Gastrocnemius medialis (tissue), 4 donors: ENCODE measurements at regions of chr11 and their contacts with region 1.

Region 1: DNA sequence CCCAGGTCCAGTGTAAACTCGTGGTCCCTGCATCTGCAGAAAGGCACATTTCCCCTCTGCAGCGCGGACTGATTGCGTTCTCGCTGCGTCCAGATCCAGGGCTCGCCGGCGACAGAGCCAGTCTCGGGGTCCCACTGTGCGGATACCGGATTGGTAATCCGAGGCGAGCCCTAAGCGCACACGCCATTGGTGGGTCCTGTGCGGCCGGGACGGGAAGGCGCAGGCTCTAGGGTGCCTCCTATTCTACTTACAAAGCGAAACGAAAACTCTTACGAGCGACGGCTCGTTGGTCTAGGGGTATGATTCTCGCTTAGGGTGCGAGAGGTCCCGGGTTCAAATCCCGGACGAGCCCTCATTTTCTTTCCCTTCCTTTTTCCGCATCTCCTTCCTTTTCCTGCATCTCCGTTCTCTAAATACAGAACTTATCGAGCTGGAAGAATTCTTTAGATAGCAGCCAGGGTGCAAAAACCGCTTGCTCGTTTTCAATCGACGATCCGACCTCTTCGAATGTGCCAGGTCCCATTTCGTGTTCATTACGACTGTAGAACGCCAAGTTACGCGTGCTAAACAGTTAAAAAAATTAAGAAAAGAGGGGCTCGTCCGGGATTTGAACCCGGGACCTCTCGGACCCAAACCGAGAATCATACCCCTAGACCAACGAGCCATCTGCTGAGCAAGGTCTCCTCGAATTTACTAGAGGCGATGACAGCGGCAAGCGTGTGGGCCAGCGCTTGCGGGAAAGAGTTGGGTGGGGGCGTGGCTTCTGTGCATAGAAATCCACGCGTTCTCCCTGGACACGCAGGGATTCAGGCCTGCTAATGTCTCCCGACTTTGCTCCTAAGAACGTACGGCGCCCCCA is 29.2 kb upstream of the WNT11 start:
- DNase-seq: peak; percentile 78 to 83
- ATAC-seq: peak; percentile 83
- H3K4me3 ChIP-seq: peak overlapping the region; percentile 68 to 93 (median 87)
- H3K27ac ChIP-seq: peak overlapping the region; percentile 81 to 91 (median 84)
- H3K4me1 ChIP-seq: peaks cover 0 to 16% of the 10 kb centered on the region in 2 donors
- H3K27me3 ChIP-seq: no peaks in the 10 kb centered on the region
- CTCF ChIP-seq: no peak
- POLR2A ChIP-seq: peak in 1 of 2 donors; percentile 17

Region 2: DNA sequence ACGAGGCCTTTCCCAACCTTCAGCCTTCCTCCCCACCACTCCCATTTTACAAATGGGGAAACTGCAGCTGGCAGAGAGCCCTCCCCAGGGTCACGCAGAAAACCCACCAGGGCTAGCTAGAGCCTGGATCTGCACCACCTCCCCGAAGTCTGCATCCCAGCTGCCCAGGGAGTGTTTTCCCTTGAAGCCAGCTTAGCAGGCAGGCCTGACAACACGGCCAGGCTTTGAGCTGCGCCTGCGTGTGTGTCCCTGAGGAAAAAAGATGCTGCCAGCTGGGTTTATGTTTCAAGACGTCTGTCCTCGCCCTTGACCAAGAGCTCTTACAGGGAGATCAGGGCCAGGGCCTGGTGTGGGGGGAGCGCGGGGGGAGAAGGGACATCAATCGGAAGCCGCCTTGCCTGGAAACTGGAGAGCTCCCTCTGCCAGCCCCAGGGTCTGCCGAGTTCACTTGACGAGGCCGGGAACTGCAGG is 49.5 kb before region 1 on chr11:
- in situ Hi-C with region 1: no loop called
- intact Hi-C with region 1: loop called (anchors 2 kb)
- DNase-seq: peak; percentile 78 to 95
- ATAC-seq: peak; percentile 92 to 93
- H3K4me3 ChIP-seq: peak overlapping the region in 3 of 4 donors; percentile 15 to 36 (median 26)
- H3K27ac ChIP-seq: peak overlapping the region; percentile 86 to 90 (median 90)
- H3K4me1 ChIP-seq: peaks cover 19 to 29% of the 10 kb centered on the region in 2 donors
- H3K27me3 ChIP-seq: no peaks in the 10 kb centered on the region
- CTCF ChIP-seq: no peak
- POLR2A ChIP-seq: no peak